ENCODE measurements at regions of chr2 and their contacts with region 1.

Region 1: GRCh38 chr2:28958689-28959088 is 22.4 kb upstream of the TOGARAM2 start:
- DNase-seq: peak; percentile 60
- ATAC-seq: peak; percentile 84 to 95 (median 90)
- H3K4me3 ChIP-seq: no peak overlapping the region
- H3K27ac ChIP-seq: no peak overlapping the region
- H3K4me1 ChIP-seq: peaks cover 0 to 19% (median 5%) of the 10 kb centered on the region in 9 donors
- H3K27me3 ChIP-seq: peaks cover 0 to 6% (median 0%) of the 10 kb centered on the region in 7 donors
- CTCF ChIP-seq: peak; percentile 37 to 82 (median 67)

Region 2: DNA sequence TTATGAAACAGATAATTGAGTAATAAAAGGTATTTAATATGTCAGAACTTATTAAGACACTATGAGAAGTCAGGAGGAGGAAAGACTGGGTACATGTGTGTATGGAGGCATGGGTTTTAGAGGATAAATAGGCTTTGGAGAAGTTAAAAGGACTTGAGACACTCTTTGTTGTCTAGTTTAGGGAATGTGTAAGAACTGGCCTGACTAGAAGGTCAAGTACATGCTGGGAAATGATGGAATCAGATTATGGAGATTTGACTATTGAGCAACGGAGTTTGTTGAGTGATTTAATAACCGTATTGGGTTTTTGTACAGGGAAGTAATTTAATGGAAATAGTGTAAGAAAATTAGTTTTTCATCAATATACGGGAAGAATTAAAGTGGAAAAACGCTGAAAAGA is 176.2 kb before region 1 on chr2:
- intact Hi-C with region 1: no loop called
- DNase-seq: no peak
- ATAC-seq: no peak
- H3K4me3 ChIP-seq: no peak overlapping the region
- H3K27ac ChIP-seq: no peak overlapping the region
- H3K4me1 ChIP-seq: peaks cover 0 to 13% (median 3%) of the 10 kb centered on the region in 9 donors
- H3K27me3 ChIP-seq: no peaks in the 10 kb centered on the region
- CTCF ChIP-seq: no peak

Region 3: DNA sequence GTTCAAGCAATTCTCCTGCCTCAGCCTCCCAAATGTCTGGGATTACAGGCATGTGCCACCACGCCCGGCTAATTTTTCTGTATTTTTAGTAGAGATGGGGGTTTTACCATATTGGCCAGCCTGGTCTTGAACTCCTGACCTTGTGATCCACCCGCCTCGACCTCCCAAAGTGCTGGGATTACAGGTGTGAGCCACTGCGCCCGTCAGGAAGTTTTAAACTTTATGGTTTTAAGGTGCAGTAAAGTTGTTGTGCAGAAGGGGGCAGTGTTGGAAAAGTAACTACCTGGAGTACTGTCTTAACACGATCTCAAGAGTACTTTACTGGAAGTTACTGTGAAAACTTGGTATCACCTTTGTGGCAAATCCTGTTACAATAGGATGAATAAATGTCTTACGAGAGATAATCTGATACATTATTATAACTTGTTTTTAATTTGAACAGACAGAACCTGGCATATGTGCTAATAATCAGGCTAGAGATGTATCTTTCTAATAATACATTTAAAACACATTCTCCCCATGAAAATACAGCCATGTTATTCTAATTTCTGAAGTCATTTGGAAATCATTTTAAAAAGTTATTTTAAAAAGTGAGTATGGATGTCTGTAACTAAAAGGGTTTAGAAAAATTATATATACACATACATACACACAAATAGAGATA is 137.3 kb before region 1 on chr2:
- intact Hi-C with region 1: loop called in 1 of 10 experiments (anchors 10 kb)
- DNase-seq: peak in 1 of 2 donors; percentile 47
- ATAC-seq: peak in 5 of 8 donors; percentile 46 to 67 (median 65)
- H3K4me3 ChIP-seq: no peak overlapping the region
- H3K27ac ChIP-seq: no peak overlapping the region
- H3K4me1 ChIP-seq: peaks cover 0 to 6% (median 0%) of the 10 kb centered on the region in 9 donors
- H3K27me3 ChIP-seq: no peaks in the 10 kb centered on the region
- CTCF ChIP-seq: peak; percentile 50 to 79 (median 70)

Region 4: GRCh38 chr2:29014811-29015421 is 56.2 kb after region 1 on chr2:
- intact Hi-C with region 1: loop called in 5 of 10 experiments (anchors 2 to 5 kb)
- DNase-seq: peak; percentile 63 to 67
- ATAC-seq: peak; percentile 3 to 48 (median 26)
- H3K4me3 ChIP-seq: peak overlapping the region in 8 of 10 donors; percentile 1 to 41 (median 29)
- H3K27ac ChIP-seq: peak overlapping the region; percentile 49 to 95 (median 88)
- H3K4me1 ChIP-seq: peaks cover 22 to 84% (median 72%) of the 10 kb centered on the region in 9 donors
- H3K27me3 ChIP-seq: no peaks in the 10 kb centered on the region
- CTCF ChIP-seq: peak in 2 of 9 donors; percentile 23 to 33

Region 5: DNA sequence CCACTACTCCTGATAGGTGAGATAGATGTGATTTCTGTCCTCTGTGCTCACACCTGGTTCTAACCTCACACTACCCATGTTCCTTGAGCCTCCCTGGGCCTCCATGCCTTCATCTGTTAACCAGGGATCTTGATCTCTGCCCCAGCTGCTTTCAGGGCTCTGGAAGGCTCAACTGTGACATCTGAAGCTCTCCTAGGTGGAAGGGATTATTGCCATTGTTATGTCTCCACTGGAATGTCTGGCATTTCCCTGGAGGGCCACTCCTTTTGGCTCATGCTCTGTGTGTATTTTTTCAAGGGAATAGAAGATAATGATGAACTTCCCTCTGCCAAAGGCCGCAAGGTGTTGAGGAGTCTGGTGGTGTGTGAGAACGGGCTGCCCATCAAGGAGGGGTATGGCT is 74.5 kb after region 1 on chr2:
- intact Hi-C with region 1: no loop called
- DNase-seq: no peak
- ATAC-seq: no peak
- H3K4me3 ChIP-seq: no peak overlapping the region
- H3K27ac ChIP-seq: no peak overlapping the region
- H3K4me1 ChIP-seq: peaks cover 0 to 13% (median 0%) of the 10 kb centered on the region in 9 donors
- H3K27me3 ChIP-seq: no peaks in the 10 kb centered on the region
- CTCF ChIP-seq: no peak

Region 6: DNA sequence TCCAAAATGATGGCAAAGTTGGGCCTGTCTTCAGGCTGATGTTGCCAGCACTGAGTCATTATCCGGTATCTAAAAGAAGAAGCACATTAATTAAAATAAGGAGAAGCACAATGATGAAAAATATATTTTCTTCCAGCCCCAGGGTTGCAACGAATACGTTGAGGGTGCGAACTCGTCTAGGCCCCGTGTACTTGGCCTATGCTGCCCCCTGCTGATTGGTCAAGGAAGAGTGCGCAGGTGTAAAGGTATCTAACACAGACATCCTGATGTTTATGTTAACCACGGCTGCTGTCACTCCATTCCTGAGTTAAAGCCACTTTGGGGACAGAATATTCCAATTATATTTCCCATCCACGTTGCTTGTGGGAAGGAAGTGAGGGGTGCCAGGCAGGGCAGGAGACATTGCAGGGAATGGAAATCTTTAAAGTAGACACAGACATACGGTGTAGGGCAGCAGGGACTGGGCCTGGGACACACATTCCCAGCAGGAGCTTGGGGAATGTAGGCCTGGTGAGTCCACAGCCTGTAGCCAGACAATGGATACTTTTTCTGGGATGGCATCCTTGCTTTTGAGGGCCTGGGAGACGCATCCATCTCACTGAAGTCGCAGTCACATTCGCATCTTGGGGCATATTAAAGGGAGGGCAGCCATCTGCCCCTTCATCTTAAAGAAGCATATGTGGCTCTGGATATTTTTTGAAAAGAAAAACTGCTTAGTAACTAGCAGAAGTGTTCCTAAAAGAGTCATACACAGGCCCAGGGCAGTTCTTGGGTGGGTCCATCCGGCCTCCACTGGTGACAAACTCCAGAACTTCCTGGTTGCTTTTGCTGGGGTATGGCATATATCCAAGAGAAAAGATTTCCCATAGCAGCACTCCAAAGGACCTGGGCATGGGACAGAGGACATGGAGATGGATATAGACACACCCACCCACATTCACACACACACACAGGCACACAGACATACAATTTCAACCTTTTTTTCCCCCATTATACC is 238.4 kb after region 1 on chr2:
- intact Hi-C with region 1: loop called (anchors 1 to 5 kb)
- DNase-seq: peak; percentile 46 to 62
- ATAC-seq: peak; percentile 67 to 90 (median 83)
- H3K4me3 ChIP-seq: no peak overlapping the region
- H3K27ac ChIP-seq: no peak overlapping the region
- H3K4me1 ChIP-seq: peaks cover 0 to 9% (median 0%) of the 10 kb centered on the region in 9 donors
- H3K27me3 ChIP-seq: no peaks in the 10 kb centered on the region
- CTCF ChIP-seq: peak; percentile 46 to 90 (median 82)

Region 7: GRCh38 chr2:29834624-29835023 is 875.9 kb after region 1 on chr2:
- intact Hi-C with region 1: loop called in 1 of 10 experiments (anchors 10 kb)
- DNase-seq: no peak
- ATAC-seq: no peak
- H3K4me3 ChIP-seq: no peak overlapping the region
- H3K27ac ChIP-seq: no peak overlapping the region
- H3K4me1 ChIP-seq: no peaks in the 10 kb centered on the region
- H3K27me3 ChIP-seq: peaks cover 0 to 11% (median under 1%) of the 10 kb centered on the region in 7 donors
- CTCF ChIP-seq: no peak

Region 8: GRCh38 chr2:29841386-29842004 is 882.8 kb after region 1 on chr2:
- intact Hi-C with region 1: loop called in 6 of 10 experiments (anchors 5 to 10 kb)
- DNase-seq: peak in 1 of 2 donors; percentile 9
- ATAC-seq: peak in 2 of 8 donors; percentile 44 to 54
- H3K4me3 ChIP-seq: no peak overlapping the region
- H3K27ac ChIP-seq: no peak overlapping the region
- H3K4me1 ChIP-seq: no peaks in the 10 kb centered on the region
- H3K27me3 ChIP-seq: peaks cover 0 to 28% (median 14%) of the 10 kb centered on the region in 7 donors
- CTCF ChIP-seq: peak; percentile 60 to 93 (median 82)

Region 9: GRCh38 chr2:30072250-30072842 is 1113.7 kb after region 1 on chr2:
- intact Hi-C with region 1: loop called in 2 of 10 experiments (anchors 5 to 10 kb)
- DNase-seq: peak; percentile 17 to 70
- ATAC-seq: peak; percentile 52 to 90 (median 88)
- H3K4me3 ChIP-seq: no peak overlapping the region
- H3K27ac ChIP-seq: no peak overlapping the region
- H3K4me1 ChIP-seq: peaks cover 0 to 8% (median 0%) of the 10 kb centered on the region in 9 donors
- H3K27me3 ChIP-seq: peaks cover 0 to 53% (median 16%) of the 10 kb centered on the region in 7 donors
- CTCF ChIP-seq: peak; percentile 24 to 74 (median 70)

Measured in heart right ventricle (tissue), 16 donors.